PC-9 (cell line): ENCODE measurements at regions of chr11 and their contacts with region 1.

Region 1: GRCh38 chr11:61627567-61628445 is 46.9 kb upstream of the SYT7 start:
- DNase-seq: peak; percentile 70 to 80
- H3K4me3 ChIP-seq: no peak overlapping the region
- H3K27ac ChIP-seq: no peak overlapping the region
- H3K4me1 ChIP-seq: peaks cover 36% of the 10 kb centered on the region
- H3K27me3 ChIP-seq: no peaks in the 10 kb centered on the region
- CTCF ChIP-seq: peak; percentile 96

Region 2: GRCh38 chr11:61446211-61446651 is 181.6 kb before region 1 on chr11:
- CTCF ChIA-PET with region 1: interaction called, 3 read pairs
- POLR2A ChIA-PET with region 1: no interaction called
- intact Hi-C with region 1: loop called (anchors 1 kb)
- DNase-seq: peak; percentile 82 to 90
- H3K4me3 ChIP-seq: no peak overlapping the region
- H3K27ac ChIP-seq: no peak overlapping the region
- H3K4me1 ChIP-seq: no peaks in the 10 kb centered on the region
- H3K27me3 ChIP-seq: no peaks in the 10 kb centered on the region
- CTCF ChIP-seq: peak; percentile 91

Region 3: DNA sequence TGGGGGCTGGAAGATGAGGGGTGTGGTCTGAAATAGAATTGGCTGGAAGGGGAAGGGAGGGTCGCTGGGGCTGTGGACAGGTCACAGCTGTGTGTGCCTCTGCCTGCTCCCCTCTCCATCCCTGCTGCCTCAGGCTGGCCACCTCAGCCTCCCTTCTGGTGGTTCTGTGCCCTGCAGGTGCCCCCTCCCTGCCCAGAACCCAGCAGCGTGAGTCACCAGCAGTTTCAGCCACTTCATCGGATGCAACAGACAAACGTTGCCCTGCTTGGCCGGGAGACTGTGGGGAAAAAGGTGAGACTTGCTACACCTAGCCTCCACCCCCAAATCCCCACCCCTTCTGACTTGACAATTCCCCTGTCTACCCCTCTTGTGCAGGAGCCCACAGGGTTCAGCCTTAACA is 141.0 kb before region 1 on chr11:
- CTCF ChIA-PET with region 1: no interaction called
- POLR2A ChIA-PET with region 1: no interaction called
- intact Hi-C with region 1: no loop called
- DNase-seq: peak; percentile 65 to 78
- H3K4me3 ChIP-seq: no peak overlapping the region
- H3K27ac ChIP-seq: peak overlapping the region; percentile 88
- H3K4me1 ChIP-seq: peaks cover 65% of the 10 kb centered on the region
- H3K27me3 ChIP-seq: no peaks in the 10 kb centered on the region
- CTCF ChIP-seq: no peak

Region 4: GRCh38 chr11:61516675-61517572 is 110.9 kb before region 1 on chr11:
- CTCF ChIA-PET with region 1: interaction called, 3 read pairs
- POLR2A ChIA-PET with region 1: no interaction called
- intact Hi-C with region 1: loop called (anchors 1 kb)
- DNase-seq: peak in 1 of 2 experiments; percentile 50
- H3K4me3 ChIP-seq: no peak overlapping the region
- H3K27ac ChIP-seq: no peak overlapping the region
- H3K4me1 ChIP-seq: peaks cover 24% of the 10 kb centered on the region
- H3K27me3 ChIP-seq: no peaks in the 10 kb centered on the region
- CTCF ChIP-seq: peak; percentile 100

Region 5: GRCh38 chr11:61567286-61568061 is 60.3 kb before region 1 on chr11:
- CTCF ChIA-PET with region 1: no interaction called
- POLR2A ChIA-PET with region 1: no interaction called
- intact Hi-C with region 1: loop called (anchors 10 kb)
- DNase-seq: peak; percentile 78 to 86
- H3K4me3 ChIP-seq: peak overlapping the region; percentile 13; the same call in 1 of the 2 replicates
- H3K27ac ChIP-seq: no peak overlapping the region
- H3K4me1 ChIP-seq: peaks cover 7% of the 10 kb centered on the region; the same call in 1 of the 2 replicates
- H3K27me3 ChIP-seq: peaks cover 53% of the 10 kb centered on the region
- CTCF ChIP-seq: peak; percentile 96

Region 6: GRCh38 chr11:61654397-61654829 is 26.6 kb after region 1 on chr11:
- CTCF ChIA-PET with region 1: no interaction called
- POLR2A ChIA-PET with region 1: interaction called, 28 read pairs
- intact Hi-C with region 1: no loop called
- DNase-seq: no peak
- H3K4me3 ChIP-seq: no peak overlapping the region
- H3K27ac ChIP-seq: no peak overlapping the region
- H3K4me1 ChIP-seq: no peaks in the 10 kb centered on the region
- H3K27me3 ChIP-seq: peaks cover 18% of the 10 kb centered on the region; the same call in 1 of the 2 replicates
- CTCF ChIP-seq: no peak